ENCODE measurements at regions of chrX and their contacts with region 1.

Region 1: GRCh38 chrX:71563921-71564320 is 14.3 kb upstream of the GCNA start:
- DNase-seq: no peak
- ATAC-seq: no peak
- H3K4me3 Mint-ChIP-seq: no peak overlapping the region
- H3K27ac Mint-ChIP-seq: no peak overlapping the region
- H3K4me1 Mint-ChIP-seq: no peaks in the 10 kb centered on the region
- H3K27me3 Mint-ChIP-seq: no peaks in the 10 kb centered on the region

Region 2: GRCh38 chrX:71400710-71401109 is 163.2 kb before region 1 on chrX:
- CTCF ChIA-PET with region 1: no interaction called
- POLR2A ChIA-PET with region 1: no interaction called
- intact Hi-C with region 1: loop called in 1 of 2 experiments (anchors 5 kb)
- DNase-seq: no peak
- ATAC-seq: peak; percentile 69
- H3K4me3 Mint-ChIP-seq: no peak overlapping the region
- H3K27ac Mint-ChIP-seq: peak overlapping the region; percentile 43
- H3K4me1 Mint-ChIP-seq: peaks cover 6% of the 10 kb centered on the region
- H3K27me3 Mint-ChIP-seq: no peaks in the 10 kb centered on the region